ENCODE measurements at regions of chr1 and their contacts with region 1.

Region 1: DNA sequence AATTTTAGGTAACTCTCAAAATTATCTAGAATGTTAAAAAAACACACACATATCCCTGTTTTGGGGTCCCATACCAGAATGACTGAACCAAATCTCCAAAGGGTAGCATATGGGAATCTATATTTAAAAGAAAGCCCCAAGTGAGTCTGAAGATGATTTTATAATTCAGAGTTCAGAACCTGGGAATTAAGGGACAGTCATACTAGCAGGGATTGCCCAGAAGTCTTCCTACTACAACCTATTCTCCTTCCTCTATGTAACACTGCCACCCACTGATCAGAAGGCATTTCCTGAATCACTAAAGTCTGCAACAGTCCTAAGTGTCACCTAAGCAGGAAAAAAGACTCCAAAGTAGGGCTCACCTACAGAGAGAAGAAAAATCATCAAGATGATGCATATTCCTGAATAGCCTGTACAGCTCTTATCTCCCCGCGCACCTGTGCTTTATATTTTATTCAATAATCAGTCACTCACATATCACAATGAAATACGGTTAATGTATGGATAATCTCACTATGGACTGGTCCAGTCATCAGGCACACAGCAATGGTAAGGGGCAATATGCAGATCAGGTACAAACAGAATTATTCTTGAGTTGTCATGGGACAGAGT is 4.9 kb downstream of the RGS1 start:
- DNase-seq: peak in 7 of 35 experiments; percentile 4 to 68 (median 7)
- ATAC-seq: peak; percentile 29 to 44 (median 38)
- H3K4me3 ChIP-seq: no peak overlapping the region
- H3K4me3 Mint-ChIP-seq: peak overlapping the region in 2 of 3 donors; percentile 35 to 61
- H3K27ac ChIP-seq: no peak overlapping the region
- H3K27ac Mint-ChIP-seq: peak overlapping the region in 1 of 2 donors; percentile 57
- H3K4me1 ChIP-seq: peaks cover 4 to 36% of the 10 kb centered on the region in 2 experiments
- H3K4me1 Mint-ChIP-seq: peaks cover 33 to 48% (median 46%) of the 10 kb centered on the region in 3 donors
- H3K27me3 ChIP-seq: no peaks in the 10 kb centered on the region
- H3K27me3 Mint-ChIP-seq: peaks cover 1 to 6% of the 10 kb centered on the region in 2 donors

Region 2: DNA sequence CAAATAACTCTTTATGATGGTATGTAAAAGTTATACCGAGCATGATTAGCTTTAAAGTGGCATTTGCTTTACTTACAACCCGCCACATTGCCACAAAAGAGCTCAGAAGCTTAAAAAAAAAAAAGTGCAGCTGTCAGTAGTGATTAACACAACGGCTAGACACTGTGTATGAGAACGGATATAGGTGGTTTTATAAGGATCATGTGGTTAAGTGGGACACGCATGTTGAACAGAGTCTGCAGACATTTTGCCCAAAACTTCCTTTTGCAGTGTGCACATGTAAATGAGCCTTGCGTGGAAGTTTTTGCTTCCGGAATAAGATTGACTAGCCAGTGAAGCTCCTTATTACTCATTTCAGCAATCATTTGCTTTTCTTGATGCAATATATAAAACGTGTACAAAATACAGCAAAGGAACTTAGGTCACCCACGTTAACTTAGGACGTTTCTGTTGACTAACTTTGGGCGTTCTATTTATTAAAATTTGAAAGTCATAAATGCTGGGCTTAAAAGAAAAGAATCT is 63.6 kb before region 1 on chr1:
- CTCF ChIA-PET with region 1: interaction called, 6 to 16 read pairs
- POLR2A ChIA-PET with region 1: interaction called, 21 to 31 read pairs
- DNase-seq: peak in 34 of 35 experiments; percentile 8 to 93 (median 56)
- ATAC-seq: peak; percentile 95 to 99 (median 98)
- H3K4me3 ChIP-seq: peak overlapping the region in 1 of 2 donors; percentile 9
- H3K4me3 Mint-ChIP-seq: peak overlapping the region; percentile 61 to 64 (median 61)
- H3K27ac ChIP-seq: peak overlapping the region; percentile 74
- H3K27ac Mint-ChIP-seq: peak overlapping the region; percentile 86 to 93
- H3K4me1 ChIP-seq: peaks cover 8 to 22% of the 10 kb centered on the region in 2 experiments
- H3K4me1 Mint-ChIP-seq: peaks cover 34 to 67% (median 48%) of the 10 kb centered on the region in 3 donors
- H3K27me3 ChIP-seq: no peaks in the 10 kb centered on the region
- H3K27me3 Mint-ChIP-seq: no peaks in the 10 kb centered on the region

Region 3: GRCh38 chr1:192539297-192540092 is 41.0 kb before region 1 on chr1:
- CTCF ChIA-PET with region 1: interaction called, 3 to 6 read pairs
- POLR2A ChIA-PET with region 1: interaction called, 12 to 15 read pairs
- DNase-seq: peak in 2 of 35 experiments; percentile 24 to 37
- ATAC-seq: peak in 2 of 4 experiments; percentile 33 to 39
- H3K4me3 ChIP-seq: no peak overlapping the region
- H3K4me3 Mint-ChIP-seq: peak overlapping the region; percentile 10 to 49 (median 39)
- H3K27ac ChIP-seq: peak overlapping the region; percentile 72
- H3K27ac Mint-ChIP-seq: peak overlapping the region; percentile 88 to 94
- H3K4me1 ChIP-seq: peaks cover 8 to 10% of the 10 kb centered on the region in 2 experiments
- H3K4me1 Mint-ChIP-seq: peaks cover 30 to 62% (median 33%) of the 10 kb centered on the region in 3 donors
- H3K27me3 ChIP-seq: no peaks in the 10 kb centered on the region
- H3K27me3 Mint-ChIP-seq: no peaks in the 10 kb centered on the region

Region 4: GRCh38 chr1:192545896-192546521 is 34.4 kb before region 1 on chr1:
- CTCF ChIA-PET with region 1: interaction called, 3 to 6 read pairs
- POLR2A ChIA-PET with region 1: interaction called, 7 to 12 read pairs
- DNase-seq: no peak
- ATAC-seq: no peak
- H3K4me3 ChIP-seq: no peak overlapping the region
- H3K4me3 Mint-ChIP-seq: peak overlapping the region in 1 of 3 donors; percentile 2
- H3K27ac ChIP-seq: peak overlapping the region; percentile 36
- H3K27ac Mint-ChIP-seq: no peak overlapping the region
- H3K4me1 ChIP-seq: peaks cover 4 to 16% of the 10 kb centered on the region in 2 experiments
- H3K4me1 Mint-ChIP-seq: peaks cover 25 to 62% (median 36%) of the 10 kb centered on the region in 3 donors
- H3K27me3 ChIP-seq: no peaks in the 10 kb centered on the region
- H3K27me3 Mint-ChIP-seq: no peaks in the 10 kb centered on the region

Region 5: DNA sequence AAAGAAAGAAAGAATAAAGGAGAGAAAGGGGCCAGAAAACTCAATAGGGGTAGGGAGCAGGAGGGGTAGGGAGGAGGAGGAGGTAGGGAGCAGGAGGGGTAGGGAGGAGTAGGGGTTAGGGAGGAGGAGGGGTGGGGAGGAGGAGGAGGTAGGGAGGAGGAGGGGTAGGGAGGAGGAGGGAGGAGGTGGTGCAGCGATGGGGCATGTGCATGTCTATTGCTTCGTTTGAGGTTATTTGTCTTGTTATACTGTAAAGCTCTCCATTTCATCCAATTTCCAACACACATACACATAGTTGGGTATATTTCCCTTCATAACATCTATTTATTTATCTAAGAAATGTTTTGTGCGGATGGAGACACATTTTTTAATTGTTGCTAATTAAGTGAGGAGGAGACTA is 14.8 kb after region 1 on chr1:
- CTCF ChIA-PET with region 1: interaction called in 1 of 2 experiments, 3 read pairs
- POLR2A ChIA-PET with region 1: interaction called, 8 to 11 read pairs
- DNase-seq: no peak
- ATAC-seq: no peak
- H3K4me3 ChIP-seq: no peak overlapping the region
- H3K4me3 Mint-ChIP-seq: no peak overlapping the region
- H3K27ac ChIP-seq: no peak overlapping the region
- H3K27ac Mint-ChIP-seq: no peak overlapping the region
- H3K4me1 ChIP-seq: no peaks in the 10 kb centered on the region
- H3K4me1 Mint-ChIP-seq: no peaks in the 10 kb centered on the region
- H3K27me3 ChIP-seq: no peaks in the 10 kb centered on the region
- H3K27me3 Mint-ChIP-seq: peaks cover 3 to 4% of the 10 kb centered on the region in 2 donors

Region 6: DNA sequence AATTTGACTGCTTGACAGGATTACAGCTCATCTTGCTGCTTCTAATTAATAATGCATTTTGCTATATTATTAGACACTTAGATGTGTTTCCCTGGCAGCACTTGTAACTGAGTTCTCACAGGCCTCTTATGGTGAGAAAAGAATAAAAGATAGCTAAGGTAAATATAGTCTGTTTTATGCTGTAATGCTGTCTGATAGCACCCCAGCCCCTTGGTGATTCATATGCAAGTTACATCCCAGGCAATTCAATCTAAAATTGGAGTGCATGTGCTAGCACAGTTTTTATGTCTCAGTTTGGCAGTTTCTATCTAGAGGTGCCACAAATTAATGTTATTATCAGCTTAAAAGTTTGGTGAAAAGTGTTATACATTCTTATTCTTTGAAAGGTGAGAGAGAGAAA is 97.6 kb after region 1 on chr1:
- CTCF ChIA-PET with region 1: no interaction called
- POLR2A ChIA-PET with region 1: no interaction called
- DNase-seq: no peak
- ATAC-seq: no peak
- H3K4me3 ChIP-seq: no peak overlapping the region
- H3K4me3 Mint-ChIP-seq: no peak overlapping the region
- H3K27ac ChIP-seq: no peak overlapping the region
- H3K27ac Mint-ChIP-seq: no peak overlapping the region
- H3K4me1 ChIP-seq: no peaks in the 10 kb centered on the region
- H3K4me1 Mint-ChIP-seq: no peaks in the 10 kb centered on the region
- H3K27me3 ChIP-seq: no peaks in the 10 kb centered on the region
- H3K27me3 Mint-ChIP-seq: peaks cover 4 to 5% of the 10 kb centered on the region in 2 donors

Region 7: DNA sequence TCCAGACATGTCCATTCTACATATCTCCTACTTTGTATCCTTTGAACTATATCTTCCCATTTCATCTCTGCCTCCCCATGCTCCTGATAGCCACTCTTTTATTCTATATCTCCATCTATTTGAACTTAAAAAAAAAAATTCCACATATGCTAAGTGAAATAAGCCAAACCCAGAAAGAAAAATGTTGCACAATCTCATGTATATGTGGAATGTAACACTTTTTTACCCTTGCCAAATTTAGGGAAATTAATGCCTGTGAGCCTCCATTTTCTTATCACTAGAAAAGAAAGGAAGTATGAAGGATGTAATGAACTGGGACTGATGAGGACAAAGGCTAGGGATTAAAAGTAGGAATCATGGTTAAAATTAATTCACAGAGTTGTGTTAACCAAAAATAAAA is 109.0 kb after region 1 on chr1:
- CTCF ChIA-PET with region 1: no interaction called
- POLR2A ChIA-PET with region 1: no interaction called
- DNase-seq: no peak
- ATAC-seq: no peak
- H3K4me3 ChIP-seq: no peak overlapping the region
- H3K4me3 Mint-ChIP-seq: no peak overlapping the region
- H3K27ac ChIP-seq: no peak overlapping the region
- H3K27ac Mint-ChIP-seq: no peak overlapping the region
- H3K4me1 ChIP-seq: no peaks in the 10 kb centered on the region
- H3K4me1 Mint-ChIP-seq: no peaks in the 10 kb centered on the region
- H3K27me3 ChIP-seq: peaks cover 0 to 3% of the 10 kb centered on the region in 2 experiments
- H3K27me3 Mint-ChIP-seq: peaks cover 12 to 35% of the 10 kb centered on the region in 2 donors

Region 8: DNA sequence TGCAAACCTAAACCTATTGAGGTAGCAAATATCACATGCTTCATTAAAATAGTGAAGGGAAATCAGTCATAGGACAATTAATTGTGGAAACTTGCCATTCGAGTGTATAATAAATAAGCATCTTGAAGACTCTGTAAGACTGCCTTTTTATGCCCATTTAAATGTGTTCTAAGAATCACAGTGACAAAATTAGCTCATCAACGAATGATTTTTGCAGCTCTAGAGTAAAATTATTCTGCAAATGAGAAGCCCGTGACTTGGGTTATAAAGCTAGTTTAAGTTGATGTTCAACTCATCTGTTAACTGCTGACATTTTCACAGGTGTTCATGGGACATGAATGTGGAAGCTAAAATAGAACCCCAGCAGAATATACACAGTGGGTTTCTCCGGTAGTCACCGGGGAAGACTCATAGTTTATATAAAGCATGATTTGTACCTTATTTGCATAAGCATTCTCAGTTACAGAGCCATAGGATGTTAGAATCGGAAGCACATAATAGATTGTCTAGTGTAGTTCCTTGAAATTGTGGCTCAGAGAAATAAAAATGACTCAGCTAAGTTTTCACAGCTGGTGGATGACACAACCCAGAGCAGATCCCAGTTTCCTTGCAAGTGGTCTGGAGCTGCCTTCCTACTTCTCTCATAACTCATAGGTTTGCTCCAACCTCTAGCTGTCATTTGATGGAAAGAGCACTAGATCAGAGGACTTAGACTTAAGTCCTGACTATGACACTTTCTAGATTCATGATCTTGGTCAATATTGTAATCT is 371.4 kb after region 1 on chr1:
- CTCF ChIA-PET with region 1: no interaction called
- POLR2A ChIA-PET with region 1: no interaction called
- DNase-seq: no peak
- ATAC-seq: no peak
- H3K4me3 ChIP-seq: no peak overlapping the region
- H3K4me3 Mint-ChIP-seq: no peak overlapping the region
- H3K27ac ChIP-seq: no peak overlapping the region
- H3K27ac Mint-ChIP-seq: no peak overlapping the region
- H3K4me1 ChIP-seq: no peaks in the 10 kb centered on the region
- H3K4me1 Mint-ChIP-seq: no peaks in the 10 kb centered on the region
- H3K27me3 ChIP-seq: no peaks in the 10 kb centered on the region
- H3K27me3 Mint-ChIP-seq: no peaks in the 10 kb centered on the region

Region 9: DNA sequence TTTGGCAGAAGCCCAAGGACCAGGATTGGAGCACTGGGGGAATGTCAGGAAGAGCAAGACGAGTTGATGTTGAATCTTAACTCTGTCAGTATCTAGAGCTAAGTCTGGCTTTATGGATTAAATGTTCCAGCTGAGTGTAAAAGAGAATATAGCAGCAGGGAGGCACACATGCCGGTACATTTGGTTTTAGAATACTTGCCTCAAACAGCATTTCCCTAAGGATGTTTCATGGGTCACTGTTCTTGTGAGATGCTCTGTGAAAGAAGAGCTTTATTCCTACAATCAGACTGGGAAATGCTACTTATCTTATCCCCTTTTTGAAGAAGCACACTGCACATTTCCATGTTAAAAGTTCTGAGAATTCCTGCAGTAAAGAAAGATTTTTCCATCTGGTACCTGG is 1046.2 kb after region 1 on chr1:
- CTCF ChIA-PET with region 1: no interaction called
- POLR2A ChIA-PET with region 1: interaction called in 1 of 2 experiments, 12 read pairs
- DNase-seq: no peak
- ATAC-seq: no peak
- H3K4me3 ChIP-seq: no peak overlapping the region
- H3K4me3 Mint-ChIP-seq: no peak overlapping the region
- H3K27ac ChIP-seq: no peak overlapping the region
- H3K27ac Mint-ChIP-seq: no peak overlapping the region
- H3K4me1 ChIP-seq: no peaks in the 10 kb centered on the region
- H3K4me1 Mint-ChIP-seq: peaks cover 0 to 2% (median 0%) of the 10 kb centered on the region in 3 donors
- H3K27me3 ChIP-seq: no peaks in the 10 kb centered on the region
- H3K27me3 Mint-ChIP-seq: no peaks in the 10 kb centered on the region

Measured in T-cell (primary cell).